Activated T-helper 2 cell treated with anti-CD3 and anti-CD28 coated beads, Interferon-gamma antibody, Interleukin-2, Interleukin-4, amounts not matched to agents 10 μg/mL and 5 μg/mL and 100 μg/mL, durations not matched to agents 14 hours and 24 hours and 36 hours (primary cell): ENCODE measurements at regions of chr1 and their contacts with region 1.

Region 1: DNA sequence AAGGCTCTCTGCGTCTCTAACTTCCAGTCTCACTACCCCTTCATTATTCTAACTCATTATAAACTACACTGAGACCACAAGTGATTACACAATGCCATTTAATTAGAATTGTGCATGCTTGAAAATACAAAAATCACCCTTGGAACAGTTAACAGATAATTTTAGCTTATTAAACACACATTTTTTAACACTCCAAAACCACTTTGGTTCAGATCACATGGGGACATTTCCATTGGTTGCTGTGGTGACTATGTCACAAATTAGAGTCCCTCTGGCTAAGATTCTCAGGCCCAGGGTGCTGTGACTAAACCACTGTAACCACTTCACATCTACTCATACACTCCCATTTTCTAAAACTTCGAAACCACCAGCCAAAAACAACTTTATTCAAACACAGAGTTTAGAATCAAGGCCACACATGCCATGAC is 43.0 kb downstream of the JAK1 start:
- DNase-seq: no peak
- H3K4me3 Mint-ChIP-seq: peak overlapping the region; percentile 15
- H3K27ac Mint-ChIP-seq: peak overlapping the region; percentile 87
- H3K4me1 Mint-ChIP-seq: peaks cover 71% of the 10 kb centered on the region
- H3K27me3 Mint-ChIP-seq: no peaks in the 10 kb centered on the region

Region 2: DNA sequence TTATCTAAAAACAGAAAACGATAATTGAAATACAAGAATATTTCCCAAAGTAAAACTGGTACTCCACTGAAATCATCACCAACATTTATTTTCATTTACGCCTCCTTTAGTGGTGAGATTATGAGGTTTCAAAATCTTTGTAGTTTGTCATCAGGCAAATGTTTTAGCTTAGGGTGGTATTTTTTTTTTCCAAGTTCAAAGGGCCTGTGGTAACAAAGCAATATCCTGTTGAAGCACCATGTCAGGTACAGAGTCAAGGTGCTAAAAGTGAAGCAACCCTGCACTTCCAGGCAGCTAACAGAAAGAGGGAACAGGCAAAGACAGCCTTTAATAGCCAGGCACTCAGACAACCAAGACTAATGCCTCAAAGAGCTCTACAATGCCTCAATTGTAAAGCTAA is 46.2 kb before region 1 on chr1:
- intact Hi-C with region 1: loop called (anchors 5 kb)
- DNase-seq: no peak
- H3K4me3 Mint-ChIP-seq: no peak overlapping the region
- H3K27ac Mint-ChIP-seq: no peak overlapping the region
- H3K4me1 Mint-ChIP-seq: peaks cover 31% of the 10 kb centered on the region
- H3K27me3 Mint-ChIP-seq: no peaks in the 10 kb centered on the region

Region 3: GRCh38 chr1:64912191-64912590 is 11.1 kb before region 1 on chr1:
- intact Hi-C with region 1: loop called (anchors 1 kb)
- DNase-seq: no peak
- H3K4me3 Mint-ChIP-seq: no peak overlapping the region
- H3K27ac Mint-ChIP-seq: peak overlapping the region; percentile 6
- H3K4me1 Mint-ChIP-seq: peaks cover 64% of the 10 kb centered on the region
- H3K27me3 Mint-ChIP-seq: no peaks in the 10 kb centered on the region

Region 4: DNA sequence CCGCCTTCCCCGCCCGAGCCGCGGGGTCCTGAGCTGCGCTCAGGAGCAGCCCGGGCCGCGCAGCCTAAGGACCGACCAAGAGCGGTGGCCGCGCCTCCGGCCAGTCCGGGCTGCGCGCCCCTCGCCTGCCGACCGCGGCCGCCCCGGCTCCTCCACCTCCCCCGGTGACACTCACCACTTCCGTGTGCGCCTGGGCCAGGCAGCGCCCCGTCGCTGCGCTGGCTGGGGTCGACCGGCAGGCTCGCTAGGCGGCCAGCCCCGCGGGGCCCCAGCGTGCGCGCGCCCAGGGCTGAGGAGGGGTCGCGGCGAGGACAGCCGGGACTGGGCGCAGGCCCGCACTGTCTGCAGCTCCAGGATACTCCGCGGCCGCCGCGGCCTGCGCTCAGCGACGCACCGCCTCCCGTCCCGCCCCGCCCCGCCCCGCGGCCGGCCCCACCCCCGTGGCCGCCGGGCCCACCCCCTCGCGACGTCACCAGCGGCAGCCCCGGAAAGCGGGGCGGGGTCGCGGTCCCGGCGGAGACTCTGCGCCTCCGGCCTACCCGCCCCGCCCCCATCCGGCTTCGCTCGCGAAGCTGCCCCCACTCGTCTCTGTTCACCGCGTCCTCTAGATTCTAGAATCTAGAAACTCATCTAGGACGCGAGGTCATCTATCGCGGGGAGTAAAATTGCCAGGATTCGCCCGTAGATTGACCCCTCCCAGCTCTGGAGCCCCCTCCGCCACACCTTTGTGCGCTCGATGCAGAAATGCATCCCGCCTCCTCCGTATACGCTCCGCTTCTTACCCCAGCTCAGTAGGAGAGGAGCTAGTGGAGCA is 43.1 kb after region 1 on chr1 and contains the start of gene JAK1:
- intact Hi-C with region 1: loop called (anchors 1 kb)
- DNase-seq: peak; percentile 81
- H3K4me3 Mint-ChIP-seq: peak within 1 kb of the TSS; percentile 89
- H3K27ac Mint-ChIP-seq: peak within 1 kb of the TSS; percentile 80
- H3K4me1 Mint-ChIP-seq: peaks cover 50% of the 10 kb centered on the region
- H3K27me3 Mint-ChIP-seq: no peaks in the 10 kb centered on the region
- total RNA-seq, gene JAK1: 99.9 and 105 TPM in 2 replicates

Region 5: DNA sequence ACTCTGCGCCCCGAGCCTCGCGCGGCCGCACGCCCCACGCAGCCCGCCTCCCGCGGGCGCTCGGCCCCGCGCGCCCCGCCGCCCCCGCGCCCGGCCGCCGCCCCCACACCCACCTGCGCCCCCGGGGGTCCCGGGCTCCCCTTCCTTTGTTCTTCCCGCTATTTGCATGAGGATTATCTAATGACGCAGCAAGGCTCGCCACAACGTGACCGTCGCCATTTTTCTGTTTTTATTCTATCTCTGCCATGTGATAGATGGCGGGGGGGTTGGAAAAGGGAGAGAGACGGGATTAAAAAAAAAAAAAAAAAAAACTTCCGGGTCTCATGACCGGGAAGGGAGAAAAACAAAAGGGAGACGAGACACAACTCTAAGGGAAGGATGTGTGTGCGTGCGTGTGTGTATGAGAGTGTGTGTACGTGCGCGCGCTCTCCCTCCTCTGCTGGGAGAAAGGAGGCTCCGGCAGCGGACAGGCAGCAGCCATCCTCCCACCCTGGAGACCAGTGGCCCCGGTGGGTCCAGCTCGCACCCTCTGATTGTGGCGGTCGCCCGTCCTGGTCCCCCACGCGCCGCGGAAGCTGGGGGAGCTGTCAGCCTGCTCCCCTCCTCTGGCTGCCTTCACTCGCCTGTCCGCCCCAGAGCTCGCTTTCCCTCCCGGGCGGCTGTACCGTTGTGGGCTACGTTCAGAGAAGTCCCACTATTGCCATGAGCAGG is 144.3 kb after region 1 on chr1:
- intact Hi-C with region 1: loop called (anchors 2 kb)
- DNase-seq: peak; percentile 38
- H3K4me3 Mint-ChIP-seq: peak overlapping the region; percentile 89
- H3K27ac Mint-ChIP-seq: peak overlapping the region; percentile 97
- H3K4me1 Mint-ChIP-seq: peaks cover 31% of the 10 kb centered on the region
- H3K27me3 Mint-ChIP-seq: peaks cover 2% of the 10 kb centered on the region